Activated CD4-positive, alpha-beta memory T cell treated with anti-CD3 and anti-CD28 coated beads, Interleukin-2, amount 10 ng/mL, durations not matched to agents 7 days and 5 days (primary cell): ENCODE measurements at regions of chr17 and their contacts with region 1.

Region 1: DNA sequence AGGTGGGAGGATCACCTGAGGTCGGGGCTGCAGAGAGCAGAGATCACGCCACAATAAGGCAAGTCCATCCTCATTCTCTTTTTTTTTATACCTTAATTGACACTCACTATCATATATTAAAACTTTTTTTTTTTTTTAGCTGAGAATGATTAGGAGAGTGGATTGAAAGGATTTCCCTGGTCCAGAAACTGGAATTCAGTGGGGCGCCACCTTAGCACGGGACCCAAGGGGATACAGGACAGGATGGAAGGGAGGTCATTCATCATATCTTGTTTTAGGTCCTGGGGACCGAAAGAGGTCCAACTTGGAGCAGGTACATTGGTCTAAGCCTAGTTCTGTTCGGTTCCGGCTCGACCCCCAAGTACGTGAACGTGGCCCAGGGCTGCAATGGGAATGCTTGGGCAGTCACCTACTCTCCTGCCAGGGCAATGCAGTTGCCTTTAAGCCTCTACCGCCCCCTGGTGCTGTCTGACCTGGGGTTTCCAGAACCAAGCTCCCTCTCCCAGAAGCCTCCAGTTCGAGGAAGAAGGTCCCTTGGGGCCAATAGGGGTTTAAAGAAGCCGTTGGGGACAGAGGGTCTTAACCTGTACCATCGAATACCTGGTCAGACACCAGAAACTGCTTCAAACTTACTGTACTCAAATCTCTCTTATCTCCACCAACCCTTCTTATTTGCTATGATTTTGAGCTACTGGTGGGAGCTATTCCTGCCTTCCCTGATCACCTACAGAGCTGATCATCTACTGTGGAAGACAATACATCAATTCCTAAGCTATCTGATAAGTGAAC is 19.9 kb upstream of the GPATCH8 start:
- DNase-seq: peak; percentile 62
- H3K4me3 Mint-ChIP-seq: no peak overlapping the region
- H3K27ac Mint-ChIP-seq: no peak overlapping the region
- H3K4me1 Mint-ChIP-seq: no peaks in the 10 kb centered on the region
- H3K27me3 Mint-ChIP-seq: peaks cover 5% of the 10 kb centered on the region

Region 2: DNA sequence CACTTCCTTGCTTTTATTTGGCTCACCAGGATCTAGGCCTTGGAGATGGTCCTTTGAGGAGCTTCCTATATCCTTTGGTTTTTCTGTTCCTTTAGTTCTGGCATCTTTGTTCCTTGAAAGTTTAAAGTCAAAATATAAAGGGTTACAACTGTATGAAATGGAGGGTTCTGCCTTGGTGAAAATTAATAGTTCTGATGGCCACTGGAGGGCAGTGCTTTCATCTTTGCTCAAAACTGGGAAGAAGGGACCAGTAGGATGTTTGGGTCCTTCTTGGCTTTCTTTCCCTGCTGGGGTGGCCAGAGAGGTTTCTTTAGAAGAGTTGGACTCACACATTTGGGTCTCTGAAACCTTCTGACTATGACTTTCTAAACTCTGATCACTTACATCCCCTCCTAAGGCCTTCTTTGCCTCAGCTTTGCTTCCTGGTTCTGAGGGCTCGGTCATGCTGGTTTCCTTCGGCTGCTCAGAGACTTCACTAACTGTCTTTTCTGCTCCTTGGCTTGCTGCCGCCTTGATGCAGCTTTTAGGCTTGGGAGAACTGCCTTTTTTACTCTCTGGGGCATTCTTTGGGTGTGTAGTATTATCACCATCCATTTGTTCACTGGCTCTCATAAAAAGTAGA is 122.7 kb before region 1 on chr17:
- CTCF ChIA-PET with region 1: interaction called, 14 read pairs
- POLR2A ChIA-PET with region 1: no interaction called
- DNase-seq: no peak
- H3K4me3 Mint-ChIP-seq: no peak overlapping the region
- H3K27ac Mint-ChIP-seq: no peak overlapping the region
- H3K4me1 Mint-ChIP-seq: peaks cover 11% of the 10 kb centered on the region
- H3K27me3 Mint-ChIP-seq: no peaks in the 10 kb centered on the region

Region 3: DNA sequence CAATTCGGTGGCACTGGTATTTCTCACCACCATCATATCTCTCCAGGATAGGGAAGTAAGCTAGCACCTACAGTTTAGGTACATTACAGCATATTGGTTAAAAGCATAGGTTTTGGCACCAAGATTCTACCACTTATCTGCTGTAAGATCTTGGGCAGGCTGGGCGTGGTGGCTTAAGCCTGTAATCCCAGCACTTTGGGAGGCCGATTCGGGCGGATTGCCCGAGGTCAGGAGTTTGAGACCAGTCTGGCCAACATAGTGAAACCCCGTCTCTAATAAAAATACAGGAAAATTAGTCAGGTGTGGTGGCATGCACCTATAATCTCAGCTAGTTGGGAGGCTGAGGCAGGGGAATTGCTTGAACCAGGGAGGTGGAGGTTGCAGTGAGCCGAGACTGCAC is 71.2 kb before region 1 on chr17:
- CTCF ChIA-PET with region 1: no interaction called
- POLR2A ChIA-PET with region 1: no interaction called
- DNase-seq: no peak
- H3K4me3 Mint-ChIP-seq: no peak overlapping the region
- H3K27ac Mint-ChIP-seq: no peak overlapping the region
- H3K4me1 Mint-ChIP-seq: peaks cover 4% of the 10 kb centered on the region
- H3K27me3 Mint-ChIP-seq: no peaks in the 10 kb centered on the region